ENCODE measurements at regions of chr11 and their contacts with region 1.

Region 1: GRCh38 chr11:2930704-2931428 is 1.6 kb upstream of the PHLDA2 start:
- DNase-seq: peak; percentile 88
- H3K4me3 Mint-ChIP-seq: peak overlapping the region; percentile 73
- H3K27ac Mint-ChIP-seq: peak overlapping the region; percentile 94
- H3K4me1 Mint-ChIP-seq: peaks cover 20% of the 10 kb centered on the region
- H3K27me3 Mint-ChIP-seq: no peaks in the 10 kb centered on the region
- CTCF ChIP-seq: peak; percentile 92

Region 2: GRCh38 chr11:2532704-2533586 is 397.9 kb before region 1 on chr11:
- CTCF ChIA-PET with region 1: interaction called, 20 read pairs
- POLR2A ChIA-PET with region 1: interaction called, 11 read pairs
- intact Hi-C with region 1: loop called (anchors 1 kb)
- DNase-seq: peak; percentile 89
- H3K4me3 Mint-ChIP-seq: peak overlapping the region; percentile 64
- H3K27ac Mint-ChIP-seq: peak overlapping the region; percentile 42
- H3K4me1 Mint-ChIP-seq: peaks cover 19% of the 10 kb centered on the region
- H3K27me3 Mint-ChIP-seq: no peaks in the 10 kb centered on the region
- CTCF ChIP-seq: peak; percentile 98

Region 3: DNA sequence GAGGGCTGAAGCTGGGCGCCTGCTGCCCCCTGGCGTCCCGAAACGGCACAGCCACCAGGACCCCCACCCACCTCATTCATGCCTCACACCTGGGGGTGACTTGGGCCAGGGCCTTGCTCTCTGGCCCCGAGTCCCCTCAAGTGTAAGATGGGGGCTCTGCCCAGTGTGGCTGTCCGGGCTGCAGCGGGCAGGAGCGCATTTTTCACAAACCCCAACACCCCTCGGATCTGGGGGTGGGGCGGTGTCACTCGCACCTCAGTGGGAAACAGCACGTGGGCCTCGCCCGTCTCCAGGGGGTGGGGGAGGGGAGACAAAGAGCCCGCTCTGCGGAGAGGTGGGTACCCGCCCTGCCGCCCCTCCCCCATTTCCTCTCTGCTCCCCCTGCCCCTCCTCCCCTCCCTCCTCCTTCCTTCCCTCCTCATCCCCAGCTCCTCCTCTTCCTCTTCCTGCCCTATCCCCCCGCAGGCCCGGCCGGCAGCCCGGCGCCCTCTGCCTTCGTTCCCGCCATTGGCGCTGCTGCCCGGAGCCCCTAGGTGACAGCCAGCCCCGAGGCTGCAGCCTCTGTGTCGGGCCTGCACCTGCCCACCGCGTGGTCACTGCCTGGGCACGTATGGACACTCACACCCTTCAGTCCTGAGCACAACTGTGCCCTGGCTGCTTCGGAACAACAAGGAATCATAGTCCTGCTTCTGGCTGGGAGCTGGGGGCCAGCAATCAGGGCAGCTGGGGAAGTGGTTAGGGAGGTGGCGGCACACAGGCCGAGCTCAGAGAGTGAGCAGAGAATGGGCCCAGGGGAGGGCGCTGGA is 38.4 kb before region 1 on chr11:
- CTCF ChIA-PET with region 1: interaction called, 11 read pairs
- POLR2A ChIA-PET with region 1: interaction called, 9 read pairs
- intact Hi-C with region 1: loop called (anchors 2 kb)
- DNase-seq: peak; percentile 28
- H3K4me3 Mint-ChIP-seq: peak overlapping the region; percentile 48
- H3K27ac Mint-ChIP-seq: peak overlapping the region; percentile 73
- H3K4me1 Mint-ChIP-seq: peaks cover 5% of the 10 kb centered on the region
- H3K27me3 Mint-ChIP-seq: no peaks in the 10 kb centered on the region
- CTCF ChIP-seq: peak; percentile 92

Region 4: GRCh38 chr11:2912498-2912897 is 18.4 kb before region 1 on chr11:
- CTCF ChIA-PET with region 1: interaction called, 16 read pairs
- POLR2A ChIA-PET with region 1: interaction called, 24 read pairs
- intact Hi-C with region 1: no loop called
- DNase-seq: peak; percentile 96
- H3K4me3 Mint-ChIP-seq: peak overlapping the region; percentile 25
- H3K27ac Mint-ChIP-seq: no peak overlapping the region
- H3K4me1 Mint-ChIP-seq: peaks cover 28% of the 10 kb centered on the region
- H3K27me3 Mint-ChIP-seq: no peaks in the 10 kb centered on the region
- CTCF ChIP-seq: no peak

Region 5: DNA sequence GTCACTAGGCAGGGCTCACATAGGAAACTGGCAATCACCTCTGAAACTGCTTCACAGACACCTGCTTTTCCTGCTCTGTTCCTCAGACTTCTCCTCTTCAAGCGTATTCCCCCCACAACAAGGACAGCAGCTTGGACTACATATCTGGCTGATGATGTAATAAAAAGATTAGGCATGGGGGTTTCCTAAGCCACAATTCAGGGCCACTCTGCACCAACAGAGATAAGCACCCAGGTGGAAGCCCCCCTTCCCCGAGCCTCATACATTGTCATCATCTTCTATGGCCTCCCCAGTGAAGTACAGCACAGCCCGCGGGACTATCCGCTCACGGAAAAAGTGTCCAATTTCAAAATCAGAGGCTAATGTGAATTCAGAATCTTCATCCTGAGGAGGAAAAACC is 23.4 kb after region 1 on chr11:
- CTCF ChIA-PET with region 1: interaction called, 13 read pairs
- POLR2A ChIA-PET with region 1: interaction called, 4 read pairs
- intact Hi-C with region 1: no loop called
- DNase-seq: no peak
- H3K4me3 Mint-ChIP-seq: no peak overlapping the region
- H3K27ac Mint-ChIP-seq: no peak overlapping the region
- H3K4me1 Mint-ChIP-seq: peaks cover 6% of the 10 kb centered on the region
- H3K27me3 Mint-ChIP-seq: no peaks in the 10 kb centered on the region
- CTCF ChIP-seq: no peak

Region 6: DNA sequence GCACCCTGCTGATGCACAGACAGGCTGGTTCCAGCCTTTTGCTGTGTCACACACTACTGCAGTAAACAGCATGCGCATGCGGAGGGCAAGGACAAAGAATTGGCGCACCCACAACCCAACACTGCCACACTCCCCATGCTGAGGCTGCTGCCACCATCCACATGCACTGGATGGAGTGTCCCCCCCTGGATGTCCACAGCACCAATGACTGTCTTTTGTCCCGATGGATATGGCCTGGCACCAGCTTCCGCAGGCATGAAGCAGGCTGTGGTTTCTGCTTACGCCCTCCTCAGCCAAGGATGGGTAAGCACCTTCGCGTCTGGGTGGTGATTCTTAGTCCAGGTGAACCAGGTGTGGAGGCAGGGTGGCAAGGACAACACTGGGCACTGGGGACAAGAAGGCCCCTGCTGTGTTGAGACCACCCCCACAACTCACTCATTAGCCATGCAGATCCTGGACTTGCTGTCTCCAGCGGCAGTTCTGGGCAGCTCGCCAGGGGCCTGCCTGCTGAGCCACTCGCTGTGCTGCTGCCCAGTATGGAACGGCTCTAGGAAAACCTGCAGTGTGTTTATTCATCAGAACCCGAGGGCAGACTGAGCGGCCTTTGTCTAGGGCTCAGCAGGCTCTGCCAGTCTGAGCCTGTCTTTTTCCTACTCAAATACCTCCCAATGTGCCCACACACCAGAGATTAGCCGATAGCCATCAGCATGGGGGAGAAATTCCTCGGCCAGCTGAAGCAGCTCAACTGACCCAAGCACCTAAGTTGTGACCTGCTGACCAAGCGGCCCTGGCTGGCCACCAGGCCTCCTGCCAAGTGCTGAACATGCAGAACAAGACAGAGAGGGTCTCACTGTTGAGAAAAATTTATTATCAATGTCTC is 69.5 kb after region 1 on chr11:
- CTCF ChIA-PET with region 1: interaction called, 5 read pairs
- POLR2A ChIA-PET with region 1: interaction called, 10 read pairs
- intact Hi-C with region 1: no loop called
- DNase-seq: peak; percentile 90
- H3K4me3 Mint-ChIP-seq: no peak overlapping the region
- H3K27ac Mint-ChIP-seq: peak overlapping the region; percentile 52
- H3K4me1 Mint-ChIP-seq: peaks cover 42% of the 10 kb centered on the region
- H3K27me3 Mint-ChIP-seq: no peaks in the 10 kb centered on the region
- CTCF ChIP-seq: no peak

Measured in MCF 10A (cell line).